Prostate gland (tissue), 2 donors: ENCODE measurements at regions of chr19 and their contacts with region 1.

Region 1: DNA sequence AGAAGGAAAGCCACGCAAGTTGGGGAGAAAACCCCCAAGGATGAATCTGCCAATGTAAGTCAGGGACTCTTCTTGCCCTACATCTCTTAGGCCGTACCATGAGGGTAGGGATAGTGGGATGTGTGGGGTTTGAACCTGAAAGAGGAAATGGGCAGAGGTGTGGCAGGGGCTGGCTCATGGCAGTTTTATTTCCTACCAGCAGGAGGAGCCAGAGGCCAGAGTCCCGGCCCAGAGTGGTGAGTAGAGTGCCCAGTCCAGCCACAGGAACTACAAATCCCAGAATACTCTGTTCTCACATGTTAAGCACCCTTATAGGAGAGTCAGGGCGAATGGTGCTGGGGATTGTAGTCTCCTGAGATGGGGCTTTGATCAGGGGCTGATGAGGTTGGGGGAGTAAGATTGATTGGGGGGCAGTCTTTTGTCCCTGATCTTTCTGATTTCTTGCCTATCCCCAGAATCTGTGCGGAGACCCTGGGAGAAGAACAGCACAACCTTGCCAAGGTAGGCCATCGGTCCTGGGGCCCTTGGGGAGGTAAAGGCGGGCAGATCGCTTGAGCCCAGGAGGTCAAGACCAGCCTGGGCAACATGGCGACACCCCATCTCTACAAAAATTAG is 16.5 kb downstream of the VASP start:
- DNase-seq: peak; percentile 84
- H3K4me3 ChIP-seq: no peak overlapping the region
- H3K27ac ChIP-seq: peak overlapping the region in 1 of 2 donors; percentile 29
- H3K4me1 ChIP-seq: no peaks in the 10 kb centered on the region
- H3K27me3 ChIP-seq: no peaks in the 10 kb centered on the region
- CTCF ChIP-seq: peak; percentile 81 to 98 (median 96)
- POLR2A ChIP-seq: no peak

Region 2: GRCh38 chr19:45439190-45439568 is 84.6 kb before region 1 on chr19:
- intact Hi-C with region 1: no loop called
- DNase-seq: no peak
- H3K4me3 ChIP-seq: peak overlapping the region; percentile 83 to 84
- H3K27ac ChIP-seq: peak overlapping the region; percentile 92 to 95
- H3K4me1 ChIP-seq: no peaks in the 10 kb centered on the region
- H3K27me3 ChIP-seq: no peaks in the 10 kb centered on the region
- CTCF ChIP-seq: no peak
- POLR2A ChIP-seq: no peak

Region 3: GRCh38 chr19:45496349-45496953 is 27.3 kb before region 1 on chr19:
- intact Hi-C with region 1: no loop called
- DNase-seq: no peak
- H3K4me3 ChIP-seq: peak overlapping the region; percentile 49 to 59
- H3K27ac ChIP-seq: peak overlapping the region in 1 of 2 donors; percentile 25
- H3K4me1 ChIP-seq: no peaks in the 10 kb centered on the region
- H3K27me3 ChIP-seq: no peaks in the 10 kb centered on the region
- CTCF ChIP-seq: no peak
- POLR2A ChIP-seq: no peak

Region 4: GRCh38 chr19:45564131-45564780 is 40.5 kb after region 1 on chr19:
- intact Hi-C with region 1: loop called (anchors 5 kb)
- DNase-seq: no peak
- H3K4me3 ChIP-seq: no peak overlapping the region
- H3K27ac ChIP-seq: no peak overlapping the region
- H3K4me1 ChIP-seq: peaks cover 3% of the 10 kb centered on the region
- H3K27me3 ChIP-seq: no peaks in the 10 kb centered on the region
- CTCF ChIP-seq: no peak
- POLR2A ChIP-seq: no peak

Region 5: DNA sequence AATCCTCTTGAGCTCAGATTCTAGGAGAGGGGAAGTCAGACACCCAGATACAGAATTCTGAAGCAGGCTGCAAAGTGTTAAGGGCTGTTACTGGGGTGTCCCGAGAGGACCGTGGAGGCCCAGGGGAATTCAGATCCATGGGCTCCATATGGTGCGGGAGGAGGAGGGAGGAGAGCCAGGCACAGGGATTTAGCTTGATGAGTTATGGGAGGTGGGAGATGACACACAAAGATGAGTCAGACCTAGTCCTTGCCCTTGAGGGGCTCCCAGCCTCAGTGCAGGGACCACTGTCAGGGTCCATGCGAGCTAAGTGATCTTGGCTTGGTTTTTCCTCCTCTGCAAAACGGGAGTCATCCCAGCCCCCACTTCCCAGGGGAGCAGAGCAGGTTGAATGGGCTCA is 129.9 kb after region 1 on chr19:
- intact Hi-C with region 1: no loop called
- DNase-seq: no peak
- H3K4me3 ChIP-seq: no peak overlapping the region
- H3K27ac ChIP-seq: no peak overlapping the region
- H3K4me1 ChIP-seq: no peaks in the 10 kb centered on the region
- H3K27me3 ChIP-seq: no peaks in the 10 kb centered on the region
- CTCF ChIP-seq: no peak
- POLR2A ChIP-seq: no peak